ENCODE measurements at regions of chr14 and their contacts with region 1.

Region 1: DNA sequence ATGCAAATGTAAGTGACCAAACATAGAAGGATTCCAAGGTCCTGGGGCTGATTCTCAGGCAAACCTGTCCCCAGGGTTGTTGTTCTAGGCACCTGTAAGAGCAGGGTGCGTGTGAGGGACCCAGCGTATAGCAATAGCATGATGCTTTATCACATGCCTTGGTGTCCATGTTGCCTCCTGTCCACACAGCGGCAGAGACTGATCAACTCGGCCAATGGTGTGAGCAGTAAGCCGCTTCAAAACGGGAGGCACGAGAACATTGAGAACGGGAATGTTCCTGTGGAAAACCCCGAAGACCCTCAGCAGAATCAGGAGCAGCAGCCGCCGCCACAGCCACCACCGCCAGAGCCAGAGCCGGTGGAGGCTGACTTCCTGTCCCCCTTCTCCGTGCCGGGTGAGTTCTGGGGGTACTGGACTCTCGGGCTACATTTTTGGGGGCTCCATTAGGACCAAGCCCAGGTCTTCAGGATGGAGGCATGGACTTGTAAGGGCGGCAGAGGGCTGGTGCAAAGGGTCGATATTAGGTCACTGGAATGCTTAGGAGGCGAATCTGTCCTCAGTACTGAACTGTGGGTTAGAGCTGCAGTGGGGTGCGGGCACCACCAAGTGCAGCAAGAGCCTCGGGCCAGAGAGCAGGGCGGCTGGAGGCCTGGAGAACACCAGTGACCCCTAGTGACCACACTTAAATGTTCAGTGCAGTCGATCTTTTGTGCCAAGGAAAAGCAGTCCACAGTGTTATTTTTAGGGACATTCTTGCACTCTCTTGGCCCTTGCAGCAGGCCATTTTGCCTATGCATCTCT is 57.2 kb upstream of the RIN3 start:
- H3K4me3 Mint-ChIP-seq: no peak overlapping the region
- H3K27ac Mint-ChIP-seq: no peak overlapping the region
- H3K4me1 Mint-ChIP-seq: peaks cover 46% of the 10 kb centered on the region
- H3K27me3 Mint-ChIP-seq: peaks cover 2% of the 10 kb centered on the region

Region 2: DNA sequence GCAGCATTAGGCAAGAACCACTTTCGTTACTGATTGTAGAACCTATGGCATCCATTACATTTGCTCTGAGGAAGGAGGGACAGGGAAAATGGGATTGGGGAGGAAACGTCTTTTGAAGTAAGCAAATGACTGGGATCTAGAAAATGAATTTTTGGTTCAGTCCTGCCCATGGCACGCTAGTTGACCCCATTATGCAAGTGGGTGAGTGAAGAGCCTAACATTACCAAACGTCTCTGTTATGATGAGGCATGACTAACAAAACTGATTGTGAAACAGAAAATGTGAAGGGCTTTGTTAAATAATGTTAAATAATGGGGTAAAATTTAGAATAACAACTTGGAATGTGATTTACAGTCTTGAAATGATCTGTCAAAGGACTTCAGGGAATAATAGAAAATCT is 295.8 kb before region 1 on chr14:
- intact Hi-C with region 1: loop called (anchors 10 kb)
- H3K4me3 Mint-ChIP-seq: no peak overlapping the region
- H3K27ac Mint-ChIP-seq: no peak overlapping the region
- H3K4me1 Mint-ChIP-seq: peaks cover 4% of the 10 kb centered on the region
- H3K27me3 Mint-ChIP-seq: no peaks in the 10 kb centered on the region

Region 3: GRCh38 chr14:92397150-92397952 is 59.1 kb before region 1 on chr14:
- intact Hi-C with region 1: loop called (anchors 10 kb)
- H3K4me3 Mint-ChIP-seq: no peak overlapping the region
- H3K27ac Mint-ChIP-seq: peak overlapping the region; percentile 59
- H3K4me1 Mint-ChIP-seq: peaks cover 72% of the 10 kb centered on the region
- H3K27me3 Mint-ChIP-seq: no peaks in the 10 kb centered on the region

Region 4: GRCh38 chr14:92495035-92495434 is 38.6 kb after region 1 on chr14:
- intact Hi-C with region 1: no loop called
- H3K4me3 Mint-ChIP-seq: no peak overlapping the region
- H3K27ac Mint-ChIP-seq: peak overlapping the region; percentile 80
- H3K4me1 Mint-ChIP-seq: peaks cover 73% of the 10 kb centered on the region
- H3K27me3 Mint-ChIP-seq: peaks cover 6% of the 10 kb centered on the region

Region 5: GRCh38 chr14:92563359-92563758 is 106.9 kb after region 1 on chr14:
- intact Hi-C with region 1: loop called (anchors 10 kb)
- H3K4me3 Mint-ChIP-seq: peak overlapping the region; percentile 4
- H3K27ac Mint-ChIP-seq: peak overlapping the region; percentile 90
- H3K4me1 Mint-ChIP-seq: peaks cover 61% of the 10 kb centered on the region
- H3K27me3 Mint-ChIP-seq: no peaks in the 10 kb centered on the region